ENCODE measurements at regions of chr3 and their contacts with region 1.

Region 1: GRCh38 chr3:51682079-51682478 is 11.0 kb downstream of the TEX264 start:
- DNase-seq: peak; percentile 79 to 87 (median 83)
- ATAC-seq: peak; percentile 99
- H3K4me3 ChIP-seq: no peak overlapping the region
- H3K27ac ChIP-seq: no peak overlapping the region
- H3K4me1 ChIP-seq: peaks cover 22 to 29% of the 10 kb centered on the region in 2 experiments
- H3K27me3 ChIP-seq: no peaks in the 10 kb centered on the region
- CTCF ChIP-seq: peak; percentile 85 to 91 (median 88)
- EP300 ChIP-seq: 0 out of 2 replicates have a peak, but pooled peaks have one; percentile 5
- POLR2A ChIP-seq: no peak
- RAD21 ChIP-seq: peak; percentile 85 to 86

Region 2: DNA sequence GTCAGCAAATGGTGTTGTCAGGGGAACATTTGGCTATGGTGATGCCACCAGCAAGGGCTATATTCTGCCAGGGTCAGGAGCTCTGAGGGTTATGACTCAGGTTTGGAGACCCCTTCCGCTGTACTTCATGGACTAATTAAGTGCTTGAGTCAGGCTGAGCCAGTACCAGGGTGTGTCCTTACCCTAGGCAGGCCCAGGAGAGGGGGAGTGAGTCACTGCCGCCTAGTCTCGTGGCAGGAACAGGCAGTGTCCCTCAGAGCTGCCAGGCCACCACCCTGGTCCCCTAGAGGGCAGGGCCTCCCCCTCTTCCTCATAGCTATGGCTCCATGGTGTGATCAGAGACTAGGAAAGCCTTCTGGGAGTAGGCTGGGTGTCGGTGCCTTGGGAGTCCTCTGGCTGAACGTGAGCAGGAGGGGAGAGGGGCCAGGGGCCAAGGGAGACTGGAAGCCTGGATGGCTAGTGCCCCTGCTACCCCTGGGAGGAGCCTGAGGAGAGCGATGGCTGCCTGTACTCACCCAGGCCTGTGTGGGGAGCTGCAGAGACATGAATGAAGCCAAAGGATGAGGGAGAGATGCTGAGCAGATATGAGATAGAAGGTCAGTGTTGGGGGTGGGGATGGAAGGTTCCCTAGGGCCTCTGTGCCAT is 1054.5 kb before region 1 on chr3:
- CTCF ChIA-PET with region 1: no interaction called
- POLR2A ChIA-PET with region 1: no interaction called
- in situ Hi-C with region 1: loop called (anchors 25 kb)
- intact Hi-C with region 1: no loop called
- DNase-seq: peak in 2 of 4 experiments; percentile 25 to 30
- ATAC-seq: peak; percentile 85
- H3K4me3 ChIP-seq: no peak overlapping the region
- H3K27ac ChIP-seq: no peak overlapping the region
- H3K4me1 ChIP-seq: peaks cover 4 to 13% of the 10 kb centered on the region in 2 experiments
- H3K27me3 ChIP-seq: no peaks in the 10 kb centered on the region
- CTCF ChIP-seq: peak; percentile 36 to 40 (median 38); a peak in 4 of 6 replicates
- EP300 ChIP-seq: no peak
- POLR2A ChIP-seq: no peak
- RAD21 ChIP-seq: peak in 1 of 2 experiments; percentile 48; a peak in 2 of 4 replicates

Region 3: DNA sequence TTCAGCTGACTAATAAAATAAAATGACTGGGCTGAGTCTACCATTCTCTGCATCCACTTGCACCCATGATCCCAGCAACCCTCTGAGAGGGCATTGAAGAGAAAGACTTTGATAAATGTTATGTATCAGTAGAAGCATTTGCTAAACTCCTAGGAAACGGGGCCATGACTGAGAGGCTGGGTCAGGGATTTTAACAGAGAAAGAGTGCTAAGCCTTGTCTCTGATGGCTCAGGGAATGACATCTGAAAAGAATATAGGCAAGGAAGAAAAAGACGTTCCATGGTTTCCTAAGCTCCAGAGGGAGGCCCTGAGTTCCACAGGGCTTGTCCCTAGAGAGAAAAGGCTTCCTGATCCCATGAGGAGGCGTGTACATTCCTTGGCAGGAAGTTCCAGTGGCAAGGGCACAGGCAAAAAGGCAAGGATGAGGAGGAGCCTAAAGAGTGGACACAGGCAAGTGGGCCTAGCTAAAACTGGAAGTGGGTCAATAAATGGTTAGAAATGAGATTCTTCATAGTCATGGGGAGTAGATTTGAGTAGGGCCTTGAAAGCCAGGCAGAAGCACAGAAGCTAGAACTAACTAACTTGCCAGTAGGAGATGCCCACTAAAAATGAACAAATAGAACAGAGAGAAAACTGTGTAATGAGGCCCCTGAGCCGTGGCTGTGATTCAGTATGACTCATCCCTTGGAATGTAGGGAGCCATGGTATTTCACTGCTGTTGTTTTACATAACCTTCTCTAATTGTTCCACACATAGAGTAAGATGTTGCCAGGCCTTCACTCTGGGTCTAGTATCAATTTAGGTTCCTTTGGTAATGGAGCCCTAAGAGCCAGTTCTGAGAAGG is 341.8 kb before region 1 on chr3:
- CTCF ChIA-PET with region 1: no interaction called
- POLR2A ChIA-PET with region 1: no interaction called
- in situ Hi-C with region 1: no loop called
- intact Hi-C with region 1: no loop called
- DNase-seq: no peak
- ATAC-seq: no peak
- H3K4me3 ChIP-seq: no peak overlapping the region
- H3K27ac ChIP-seq: no peak overlapping the region
- H3K4me1 ChIP-seq: no peaks in the 10 kb centered on the region
- H3K27me3 ChIP-seq: no peaks in the 10 kb centered on the region; a peak in 1 of 5 replicates
- CTCF ChIP-seq: no peak
- EP300 ChIP-seq: no peak
- POLR2A ChIP-seq: no peak
- RAD21 ChIP-seq: no peak

Region 4: GRCh38 chr3:51384726-51385473 is 297.2 kb before region 1 on chr3 and contains the start of gene MANF:
- CTCF ChIA-PET with region 1: no interaction called
- POLR2A ChIA-PET with region 1: no interaction called
- in situ Hi-C with region 1: no loop called
- intact Hi-C with region 1: loop called (anchors 5 kb)
- DNase-seq: peak; percentile 96 to 99 (median 98)
- ATAC-seq: peak; percentile 96
- H3K4me3 ChIP-seq: peak within 1 kb of the TSS; percentile 82
- H3K27ac ChIP-seq: peak within 1 kb of the TSS; percentile 94
- H3K4me1 ChIP-seq: peaks cover 8 to 18% of the 10 kb centered on the region in 2 experiments
- H3K27me3 ChIP-seq: no peaks in the 10 kb centered on the region
- CTCF ChIP-seq: no peak
- EP300 ChIP-seq: no peak
- POLR2A ChIP-seq: peak; percentile 82
- RAD21 ChIP-seq: no peak
- polyA plus RNA-seq, gene MANF: 6.5 to 7.1 TPM

Region 5: GRCh38 chr3:51622868-51623267 is 59.2 kb before region 1 on chr3:
- CTCF ChIA-PET with region 1: no interaction called
- POLR2A ChIA-PET with region 1: no interaction called
- in situ Hi-C with region 1: no loop called
- intact Hi-C with region 1: no loop called
- DNase-seq: no peak
- ATAC-seq: no peak
- H3K4me3 ChIP-seq: no peak overlapping the region
- H3K27ac ChIP-seq: no peak overlapping the region
- H3K4me1 ChIP-seq: no peaks in the 10 kb centered on the region
- H3K27me3 ChIP-seq: no peaks in the 10 kb centered on the region
- CTCF ChIP-seq: no peak
- EP300 ChIP-seq: no peak
- POLR2A ChIP-seq: no peak
- RAD21 ChIP-seq: no peak

Region 6: DNA sequence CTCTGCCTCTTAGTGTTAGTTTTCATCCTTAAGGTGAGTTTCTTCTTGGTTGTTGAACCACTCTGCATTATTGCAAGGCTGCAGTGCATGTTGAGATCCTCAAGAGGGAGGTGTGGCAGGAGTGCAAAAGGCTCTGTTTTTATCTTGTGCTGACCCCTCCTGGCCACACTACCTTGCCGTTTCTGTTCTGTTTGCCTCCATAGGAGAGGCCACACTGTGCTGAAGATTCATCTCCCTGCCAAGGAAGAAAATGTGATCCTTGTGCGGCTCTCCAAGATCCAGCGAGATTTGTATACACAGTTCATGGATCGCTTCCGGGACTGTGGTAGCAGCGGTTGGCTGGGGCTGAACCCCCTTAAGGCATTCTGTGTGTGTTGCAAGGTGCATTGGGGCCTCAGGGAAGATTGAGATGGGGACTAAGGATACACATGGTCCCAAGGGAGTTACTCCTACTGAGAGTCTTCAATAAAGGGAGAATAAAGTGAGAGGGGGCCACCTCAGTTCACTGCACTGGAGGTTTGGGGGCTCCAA is 44.1 kb before region 1 on chr3:
- CTCF ChIA-PET with region 1: interaction called, 14 read pairs
- POLR2A ChIA-PET with region 1: no interaction called
- in situ Hi-C with region 1: no loop called
- intact Hi-C with region 1: loop called (anchors 5 kb)
- DNase-seq: peak; percentile 69 to 73 (median 72)
- ATAC-seq: peak; percentile 99
- H3K4me3 ChIP-seq: no peak overlapping the region
- H3K27ac ChIP-seq: no peak overlapping the region
- H3K4me1 ChIP-seq: no peaks in the 10 kb centered on the region
- H3K27me3 ChIP-seq: no peaks in the 10 kb centered on the region
- CTCF ChIP-seq: peak; percentile 90 to 99 (median 99)
- EP300 ChIP-seq: no peak
- POLR2A ChIP-seq: no peak
- RAD21 ChIP-seq: peak; percentile 74 to 86

Region 7: DNA sequence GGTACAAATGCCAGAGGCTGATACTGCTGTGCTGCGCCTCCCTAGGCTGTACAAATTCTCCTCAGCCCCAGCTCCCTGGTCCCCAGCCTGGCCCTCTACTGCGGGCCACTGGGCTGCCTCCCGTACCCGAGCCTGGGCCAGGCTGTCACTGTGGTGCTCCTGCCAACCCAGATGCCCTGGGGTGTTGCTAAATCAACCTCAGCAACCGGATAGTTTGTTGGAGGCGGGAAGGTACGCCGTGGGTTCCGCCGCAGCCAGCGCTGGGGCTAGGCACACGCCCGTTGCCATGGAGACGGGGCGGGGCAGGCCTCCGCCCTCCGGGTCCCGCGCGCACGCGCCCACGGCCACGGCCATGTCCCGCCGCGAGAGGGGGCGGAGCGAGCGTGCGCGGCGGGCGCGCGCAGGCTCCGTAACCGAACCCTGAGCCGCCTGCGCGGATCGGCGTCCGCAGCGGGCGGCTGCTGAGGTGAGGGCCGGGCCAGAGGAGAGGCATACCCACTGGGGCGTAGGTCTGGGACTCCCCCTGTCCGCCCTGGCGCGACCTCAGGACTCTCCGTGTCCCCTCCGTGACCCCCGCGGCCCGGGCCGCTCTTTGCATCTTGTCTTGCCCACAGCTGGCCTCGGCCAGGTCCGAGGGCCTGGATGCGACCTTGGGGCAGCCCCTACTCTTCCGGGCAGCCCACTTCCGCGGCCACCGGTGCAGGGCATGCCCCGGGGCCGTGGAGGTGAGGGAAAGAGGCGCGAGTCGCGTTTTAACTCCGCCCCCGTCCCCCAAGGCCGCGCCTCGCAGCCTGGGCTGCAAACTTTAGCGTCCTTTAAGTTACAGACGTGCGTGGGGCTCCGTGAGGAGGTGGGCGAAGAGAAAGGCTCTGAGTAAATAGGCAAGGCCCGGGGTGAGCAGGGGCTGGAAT is 11.0 kb before region 1 on chr3 and contains the start of gene TEX264:
- CTCF ChIA-PET with region 1: no interaction called
- POLR2A ChIA-PET with region 1: interaction called, 19 read pairs
- in situ Hi-C with region 1: no loop called
- intact Hi-C with region 1: no loop called
- DNase-seq: peak; percentile 90 to 98 (median 97)
- ATAC-seq: peak; percentile 90
- H3K4me3 ChIP-seq: peak within 1 kb of the TSS; percentile 83
- H3K27ac ChIP-seq: peak within 1 kb of the TSS; percentile 88
- H3K4me1 ChIP-seq: peaks cover 21 to 26% of the 10 kb centered on the region in 2 experiments; a peak in 4 of 5 replicates
- H3K27me3 ChIP-seq: no peaks in the 10 kb centered on the region
- CTCF ChIP-seq: no peak
- EP300 ChIP-seq: no peak
- POLR2A ChIP-seq: peak; percentile 83
- RAD21 ChIP-seq: no peak
- polyA plus RNA-seq, gene TEX264: 4.1 to 20.2 TPM

Measured in K562 (cell line).